MCF 10A (cell line): ENCODE measurements at regions of chr1 and their contacts with region 1.

Region 1: DNA sequence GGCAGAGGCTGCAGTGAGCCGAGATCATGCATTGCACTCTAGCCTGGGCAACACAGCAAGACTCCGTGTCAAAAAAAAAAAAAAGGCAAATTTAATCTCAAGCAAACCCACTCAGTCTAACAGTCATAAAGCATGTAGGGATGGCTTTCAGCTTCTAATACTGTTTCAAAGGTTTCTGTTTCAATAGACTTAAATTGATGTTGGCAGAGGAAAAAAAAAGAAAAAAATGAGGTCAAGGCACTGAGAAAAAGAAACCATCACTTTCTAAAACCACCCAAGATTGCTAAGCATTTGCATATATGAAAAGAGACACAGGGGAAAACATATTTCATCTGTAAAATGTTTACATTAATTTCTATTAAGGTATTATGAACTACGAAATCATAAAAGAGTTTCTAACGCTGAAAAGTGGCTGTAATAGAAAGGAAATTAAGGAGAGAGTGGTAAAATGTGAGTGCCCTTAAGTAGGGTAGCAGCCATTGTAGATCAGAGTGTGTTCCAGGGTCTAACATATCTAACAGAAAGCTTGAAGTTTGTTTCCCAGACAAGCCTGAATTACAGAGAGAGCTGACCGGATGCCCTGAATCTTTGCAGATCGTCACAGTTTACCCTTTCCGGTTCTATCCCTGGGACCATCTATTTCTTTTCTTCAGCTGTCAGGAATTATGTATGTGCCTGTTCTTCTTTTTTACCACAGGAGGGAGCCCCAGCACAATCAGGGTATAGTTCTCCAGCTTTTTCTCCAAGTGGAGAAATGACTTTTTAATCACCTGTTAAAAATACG is 70.0 kb downstream of the PLD5 start:
- DNase-seq: peak; percentile 77
- H3K4me3 Mint-ChIP-seq: no peak overlapping the region
- H3K27ac Mint-ChIP-seq: no peak overlapping the region
- H3K4me1 Mint-ChIP-seq: peaks cover 7% of the 10 kb centered on the region
- H3K27me3 Mint-ChIP-seq: no peaks in the 10 kb centered on the region
- CTCF ChIP-seq: peak; percentile 93

Region 2: GRCh38 chr1:241895013-241895412 is 559.4 kb before region 1 on chr1:
- CTCF ChIA-PET with region 1: interaction called, 34 read pairs
- POLR2A ChIA-PET with region 1: no interaction called
- intact Hi-C with region 1: loop called (anchors 5 kb)
- DNase-seq: no peak
- H3K4me3 Mint-ChIP-seq: no peak overlapping the region
- H3K27ac Mint-ChIP-seq: no peak overlapping the region
- H3K4me1 Mint-ChIP-seq: no peaks in the 10 kb centered on the region
- H3K27me3 Mint-ChIP-seq: no peaks in the 10 kb centered on the region
- CTCF ChIP-seq: no peak

Region 3: GRCh38 chr1:242030071-242030470 is 424.4 kb before region 1 on chr1:
- CTCF ChIA-PET with region 1: interaction called, 103 read pairs
- POLR2A ChIA-PET with region 1: no interaction called
- intact Hi-C with region 1: no loop called
- DNase-seq: no peak
- H3K4me3 Mint-ChIP-seq: no peak overlapping the region
- H3K27ac Mint-ChIP-seq: no peak overlapping the region
- H3K4me1 Mint-ChIP-seq: no peaks in the 10 kb centered on the region
- H3K27me3 Mint-ChIP-seq: peaks cover 35% of the 10 kb centered on the region
- CTCF ChIP-seq: no peak

Region 4: DNA sequence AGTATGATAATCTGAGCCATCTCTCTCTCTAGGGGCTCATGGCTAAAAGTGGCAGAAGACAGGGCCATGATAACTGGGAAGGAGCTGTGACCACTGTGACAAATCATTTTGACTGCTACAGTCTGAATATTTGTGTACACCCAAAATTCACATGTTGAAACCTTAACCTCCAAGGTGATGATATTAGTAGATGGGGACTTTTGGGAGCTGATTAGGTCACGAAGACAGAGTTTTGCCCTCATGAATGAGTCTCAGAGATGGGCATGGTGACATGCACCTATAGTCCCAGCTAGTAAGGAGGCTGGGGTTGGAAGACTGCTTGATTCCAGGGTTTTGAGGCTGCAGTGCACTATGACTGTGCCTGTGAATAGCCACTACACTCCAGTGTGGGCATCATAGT is 104.8 kb before region 1 on chr1:
- CTCF ChIA-PET with region 1: no interaction called
- POLR2A ChIA-PET with region 1: no interaction called
- intact Hi-C with region 1: no loop called
- DNase-seq: no peak
- H3K4me3 Mint-ChIP-seq: no peak overlapping the region
- H3K27ac Mint-ChIP-seq: no peak overlapping the region
- H3K4me1 Mint-ChIP-seq: no peaks in the 10 kb centered on the region
- H3K27me3 Mint-ChIP-seq: no peaks in the 10 kb centered on the region
- CTCF ChIP-seq: no peak

Region 5: GRCh38 chr1:242435200-242435599 is 19.3 kb before region 1 on chr1:
- CTCF ChIA-PET with region 1: interaction called, 135 read pairs
- POLR2A ChIA-PET with region 1: interaction called, 3 read pairs
- intact Hi-C with region 1: no loop called
- DNase-seq: no peak
- H3K4me3 Mint-ChIP-seq: no peak overlapping the region
- H3K27ac Mint-ChIP-seq: no peak overlapping the region
- H3K4me1 Mint-ChIP-seq: no peaks in the 10 kb centered on the region
- H3K27me3 Mint-ChIP-seq: no peaks in the 10 kb centered on the region
- CTCF ChIP-seq: no peak

Region 6: DNA sequence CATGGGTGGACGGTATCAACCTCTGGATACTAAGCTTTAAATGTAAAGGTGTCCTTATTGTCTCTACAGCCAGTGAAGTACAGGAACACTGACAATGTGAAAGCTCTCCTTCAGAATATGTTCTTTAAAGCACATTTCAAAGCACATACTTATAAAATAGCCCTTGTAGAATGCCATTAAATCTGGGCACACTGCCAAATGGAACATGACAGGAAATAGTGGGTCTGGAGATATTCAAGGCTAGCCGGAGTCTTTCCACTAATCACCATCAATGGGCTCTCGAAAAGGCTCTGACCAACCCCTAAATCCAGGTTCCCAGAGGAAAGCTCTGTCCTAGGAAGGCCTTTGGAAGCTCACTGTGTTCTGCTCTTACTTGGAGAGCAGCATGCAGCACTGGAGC is 23.5 kb after region 1 on chr1:
- CTCF ChIA-PET with region 1: interaction called, 17 read pairs
- POLR2A ChIA-PET with region 1: no interaction called
- intact Hi-C with region 1: no loop called
- DNase-seq: no peak
- H3K4me3 Mint-ChIP-seq: no peak overlapping the region
- H3K27ac Mint-ChIP-seq: no peak overlapping the region
- H3K4me1 Mint-ChIP-seq: no peaks in the 10 kb centered on the region
- H3K27me3 Mint-ChIP-seq: no peaks in the 10 kb centered on the region
- CTCF ChIP-seq: no peak

Region 7: GRCh38 chr1:243325305-243325890 is 870.9 kb after region 1 on chr1:
- CTCF ChIA-PET with region 1: interaction called, 14 read pairs
- POLR2A ChIA-PET with region 1: no interaction called
- intact Hi-C with region 1: loop called (anchors 5 kb)
- DNase-seq: peak; percentile 82
- H3K4me3 Mint-ChIP-seq: no peak overlapping the region
- H3K27ac Mint-ChIP-seq: no peak overlapping the region
- H3K4me1 Mint-ChIP-seq: no peaks in the 10 kb centered on the region
- H3K27me3 Mint-ChIP-seq: no peaks in the 10 kb centered on the region
- CTCF ChIP-seq: peak; percentile 97